ENCODE measurements at regions of chr6 and their contacts with region 1.

Region 1: DNA sequence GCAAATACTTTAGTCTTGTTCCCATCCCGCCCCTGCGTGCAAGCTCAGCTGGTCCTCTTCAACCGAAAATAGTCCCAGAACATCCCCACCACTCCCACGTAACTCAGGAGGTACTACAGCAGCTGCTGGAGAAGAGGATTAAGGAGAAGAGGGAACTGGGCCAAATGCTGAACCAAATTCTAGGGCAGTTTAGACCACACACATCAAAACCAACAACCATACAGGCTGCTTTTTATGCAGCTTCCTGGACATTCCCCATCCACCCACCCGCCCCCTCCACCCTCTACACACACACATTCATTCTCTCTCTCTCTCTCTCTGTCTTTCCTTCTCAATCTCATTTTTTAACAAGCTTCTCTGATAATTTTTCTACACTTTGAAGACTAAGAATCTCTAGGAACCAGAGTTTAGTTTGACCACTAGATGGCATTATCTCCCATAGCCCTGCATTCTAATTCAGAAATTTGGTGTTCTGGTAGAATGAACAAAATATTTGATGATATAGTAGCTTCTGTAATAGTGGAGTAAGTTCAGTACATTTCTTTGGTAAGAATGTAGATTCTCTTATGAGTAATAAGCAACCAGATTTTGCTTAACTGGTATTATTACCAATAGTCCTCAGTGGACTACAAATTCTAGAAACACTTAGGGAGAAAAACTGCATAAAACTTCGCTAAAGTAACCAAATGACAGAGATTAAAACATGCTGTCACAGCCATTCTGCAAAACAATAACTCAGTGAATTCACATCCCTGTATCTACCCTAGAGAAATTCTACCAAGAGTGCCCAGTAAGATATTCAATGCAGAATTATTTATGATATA is 52.1 kb upstream of the BEND6 start:
- DNase-seq: no peak
- ATAC-seq: no peak
- H3K4me3 Mint-ChIP-seq: no peak overlapping the region
- H3K27ac Mint-ChIP-seq: no peak overlapping the region
- H3K4me1 Mint-ChIP-seq: no peaks in the 10 kb centered on the region
- H3K27me3 Mint-ChIP-seq: peaks cover 4% of the 10 kb centered on the region
- CTCF ChIP-seq: peak; percentile 62

Region 2: GRCh38 chr6:56890683-56891429 is 12.0 kb before region 1 on chr6:
- CTCF ChIA-PET with region 1: interaction called, 28 read pairs
- POLR2A ChIA-PET with region 1: no interaction called
- intact Hi-C with region 1: no loop called
- DNase-seq: peak; percentile 35
- ATAC-seq: peak; percentile 66
- H3K4me3 Mint-ChIP-seq: no peak overlapping the region
- H3K27ac Mint-ChIP-seq: no peak overlapping the region
- H3K4me1 Mint-ChIP-seq: peaks cover 14% of the 10 kb centered on the region
- H3K27me3 Mint-ChIP-seq: no peaks in the 10 kb centered on the region
- CTCF ChIP-seq: no peak

Region 3: GRCh38 chr6:56914798-56915658 is 12.2 kb after region 1 on chr6:
- CTCF ChIA-PET with region 1: interaction called, 12 read pairs
- POLR2A ChIA-PET with region 1: no interaction called
- intact Hi-C with region 1: no loop called
- DNase-seq: no peak
- ATAC-seq: no peak
- H3K4me3 Mint-ChIP-seq: no peak overlapping the region
- H3K27ac Mint-ChIP-seq: no peak overlapping the region
- H3K4me1 Mint-ChIP-seq: no peaks in the 10 kb centered on the region
- H3K27me3 Mint-ChIP-seq: peaks cover 3% of the 10 kb centered on the region
- CTCF ChIP-seq: no peak

Region 4: DNA sequence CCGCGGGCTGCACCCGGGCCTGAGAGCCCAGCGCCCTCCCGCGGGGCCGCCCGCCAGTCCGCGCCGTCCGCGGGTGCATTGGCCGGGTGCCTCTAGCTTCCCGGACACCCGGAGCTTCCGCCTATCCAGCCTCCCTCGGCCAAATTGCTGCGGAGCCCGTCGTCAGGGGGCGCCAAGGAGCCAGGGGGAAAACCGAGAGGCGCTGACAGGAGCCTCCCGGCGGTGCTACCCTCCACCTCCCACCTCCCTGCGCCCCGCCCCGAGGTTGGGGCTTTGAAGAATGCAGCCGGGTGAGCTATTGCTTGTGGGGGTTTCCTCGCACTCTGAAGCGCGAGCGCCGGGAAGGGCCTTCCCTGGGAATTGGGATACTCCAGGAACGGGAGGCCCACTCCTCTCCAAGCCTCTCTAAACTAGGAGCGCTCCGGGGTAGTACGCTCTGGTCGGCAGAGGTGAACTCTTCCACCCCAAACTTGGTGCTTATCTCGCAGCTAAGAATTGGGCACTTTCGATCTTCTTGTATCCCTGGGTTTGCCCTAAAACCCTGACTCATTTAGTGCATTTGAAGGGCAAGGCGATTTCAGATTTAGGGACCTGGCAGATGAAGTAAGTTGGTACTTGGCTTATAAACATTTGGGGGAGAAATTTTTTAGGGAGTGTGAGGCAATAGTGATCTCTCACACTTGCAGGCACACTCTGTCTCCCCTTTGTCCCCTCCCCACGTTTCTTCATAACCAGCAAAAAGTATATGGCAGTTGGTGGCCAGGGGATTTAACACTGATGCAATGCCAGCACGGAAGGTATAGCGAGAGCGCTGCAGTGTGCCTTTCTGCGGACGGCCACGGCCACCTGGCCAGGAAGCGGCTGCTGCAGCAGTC is 52.6 kb after region 1 on chr6:
- CTCF ChIA-PET with region 1: interaction called, 74 read pairs
- POLR2A ChIA-PET with region 1: no interaction called
- intact Hi-C with region 1: no loop called
- DNase-seq: peak; percentile 81
- ATAC-seq: peak; percentile 77
- H3K4me3 Mint-ChIP-seq: peak overlapping the region; percentile 73
- H3K27ac Mint-ChIP-seq: no peak overlapping the region
- H3K4me1 Mint-ChIP-seq: peaks cover 16% of the 10 kb centered on the region
- H3K27me3 Mint-ChIP-seq: peaks cover 54% of the 10 kb centered on the region
- CTCF ChIP-seq: peak; percentile 64

Region 5: GRCh38 chr6:57021086-57021720 is 118.3 kb after region 1 on chr6:
- CTCF ChIA-PET with region 1: interaction called, 50 read pairs
- POLR2A ChIA-PET with region 1: no interaction called
- intact Hi-C with region 1: loop called (anchors 2 kb)
- DNase-seq: peak; percentile 3
- ATAC-seq: peak; percentile 70
- H3K4me3 Mint-ChIP-seq: no peak overlapping the region
- H3K27ac Mint-ChIP-seq: no peak overlapping the region
- H3K4me1 Mint-ChIP-seq: no peaks in the 10 kb centered on the region
- H3K27me3 Mint-ChIP-seq: peaks cover 7% of the 10 kb centered on the region
- CTCF ChIP-seq: peak; percentile 61